Dorsolateral prefrontal cortex (tissue), 120 donors: ENCODE measurements at regions of chr9 and their contacts with region 1.

Region 1: DNA sequence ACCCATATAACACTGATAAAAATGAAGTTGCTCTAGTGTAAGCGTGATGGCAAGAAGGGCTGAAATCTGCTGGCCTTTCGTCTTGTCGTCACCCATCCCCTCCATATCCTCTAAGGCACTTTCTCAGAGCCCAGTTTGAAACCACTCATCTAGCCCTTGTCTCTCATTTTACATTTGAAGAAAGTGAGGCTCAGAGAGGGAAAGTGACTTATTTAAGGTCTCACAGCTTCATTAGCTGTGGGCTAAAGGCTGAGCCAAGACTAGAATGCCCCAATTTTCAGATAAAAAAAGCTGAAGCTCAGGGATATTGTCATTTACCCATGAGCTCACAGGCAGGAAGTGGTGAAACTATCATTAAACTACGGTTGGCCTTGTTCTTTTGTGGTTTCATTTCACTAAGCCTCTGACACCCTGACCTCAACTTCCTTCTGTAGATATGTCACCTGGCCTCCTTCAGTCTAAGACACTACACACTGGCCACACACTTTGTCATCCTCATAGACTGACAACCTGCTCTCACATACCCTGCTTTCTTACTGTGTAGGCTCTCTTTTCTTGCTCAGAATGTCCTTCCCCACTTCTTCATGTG is 176.7 kb upstream of the DMAC1 start:
- DNase-seq: no peak
- H3K4me3 ChIP-seq: no peak overlapping the region
- H3K27ac ChIP-seq: no peak overlapping the region
- H3K27me3 ChIP-seq: no peaks in the 10 kb centered on the region
- CTCF ChIP-seq: no peak

Region 2: GRCh38 chr9:8254541-8254940 is 278.3 kb after region 1 on chr9:
- intact Hi-C with region 1: no loop called
- DNase-seq: no peak
- H3K4me3 ChIP-seq: no peak overlapping the region
- H3K27ac ChIP-seq: no peak overlapping the region
- H3K27me3 ChIP-seq: no peaks in the 10 kb centered on the region
- CTCF ChIP-seq: no peak

Region 3: DNA sequence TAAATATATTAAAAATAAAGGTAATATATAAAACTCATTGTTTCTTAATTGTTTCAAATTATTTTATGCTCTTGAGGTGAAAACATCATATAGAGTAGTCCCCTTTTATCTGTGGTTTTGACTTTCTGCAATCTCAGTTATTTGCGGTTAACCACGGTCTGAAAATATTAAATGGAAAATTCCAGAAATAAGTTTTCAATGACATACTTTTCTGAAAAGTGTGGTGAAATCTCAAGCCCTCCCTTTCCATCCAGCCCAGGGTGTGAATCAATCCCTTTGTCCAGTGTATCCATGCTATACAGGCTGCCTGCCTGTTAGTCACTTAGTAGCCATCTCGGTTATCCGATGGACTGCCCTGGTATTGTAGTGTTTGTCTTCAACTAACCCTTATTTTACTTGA is 370.0 kb after region 1 on chr9:
- intact Hi-C with region 1: loop called in 1 of 2 experiments (anchors 10 kb)
- DNase-seq: no peak
- H3K4me3 ChIP-seq: no peak overlapping the region
- H3K27ac ChIP-seq: peak overlapping the region in 3 of 59 donors; percentile 77 to 84 (median 83)
- H3K27me3 ChIP-seq: no peaks in the 10 kb centered on the region
- CTCF ChIP-seq: no peak